ENCODE measurements at regions of chr12 and their contacts with region 1.

Region 1: DNA sequence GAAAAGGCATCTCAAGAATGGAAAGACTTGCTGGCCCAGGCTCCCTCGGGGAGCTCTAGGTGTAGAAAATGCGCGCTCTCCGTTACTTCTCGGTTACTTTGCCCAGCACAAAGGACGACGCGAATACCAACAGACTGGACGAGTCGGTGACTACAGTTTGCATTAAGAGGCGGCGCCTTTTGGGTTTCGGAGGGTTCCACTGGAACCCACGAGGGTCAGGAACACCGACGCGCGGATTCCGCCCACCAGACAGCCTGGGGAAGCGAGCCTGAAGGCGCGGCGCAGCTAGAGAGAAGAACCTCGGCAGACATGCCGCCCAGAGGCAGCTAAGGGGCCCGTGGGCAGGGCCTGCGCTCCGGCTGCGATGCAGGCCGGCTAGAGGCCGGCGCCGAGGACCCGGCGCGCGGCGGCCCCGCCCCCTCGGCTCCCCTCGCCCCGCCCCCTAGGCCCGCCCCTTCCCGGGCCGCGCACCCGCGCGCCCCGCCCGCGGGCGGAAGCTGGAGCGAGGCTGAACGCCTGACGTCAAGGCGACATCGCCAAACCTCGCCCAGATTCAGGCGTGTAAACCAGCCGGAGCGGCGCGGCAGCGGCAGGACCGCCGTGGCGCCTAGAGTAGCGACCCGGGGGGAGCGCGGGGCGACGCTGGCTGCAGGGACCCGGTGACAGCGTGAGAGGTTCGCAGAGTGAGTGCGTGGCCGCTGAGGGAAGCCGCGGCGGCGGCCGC is at the start of gene RAP1B:
- DNase-seq: peak; percentile 94
- ATAC-seq: peak; percentile 76
- H3K4me3 Mint-ChIP-seq: peak within 1 kb of the TSS; percentile 86
- H3K27ac Mint-ChIP-seq: peak within 1 kb of the TSS; percentile 94
- H3K4me1 Mint-ChIP-seq: peaks cover 39% of the 10 kb centered on the region
- H3K27me3 Mint-ChIP-seq: no peaks in the 10 kb centered on the region
- total RNA-seq, gene RAP1B: 174 to 242 TPM

Region 2: GRCh38 chr12:68331869-68332727 is 278.4 kb before region 1 on chr12 and contains the start of gene MDM1:
- CTCF ChIA-PET with region 1: no interaction called
- POLR2A ChIA-PET with region 1: interaction called, 6 read pairs
- intact Hi-C with region 1: loop called (anchors 1 kb)
- DNase-seq: peak; percentile 97
- ATAC-seq: peak; percentile 98
- H3K4me3 Mint-ChIP-seq: peak within 1 kb of the TSS; percentile 80
- H3K27ac Mint-ChIP-seq: peak within 1 kb of the TSS; percentile 55
- H3K4me1 Mint-ChIP-seq: peaks cover 42% of the 10 kb centered on the region
- H3K27me3 Mint-ChIP-seq: peaks cover 2% of the 10 kb centered on the region
- total RNA-seq, gene MDM1: 12.7 to 13.6 TPM

Region 3: GRCh38 chr12:68374307-68374982 is 236.1 kb before region 1 on chr12:
- CTCF ChIA-PET with region 1: interaction called, 3 read pairs
- POLR2A ChIA-PET with region 1: interaction called, 4 read pairs
- intact Hi-C with region 1: loop called in 1 of 2 experiments (anchors 2 kb)
- DNase-seq: peak; percentile 79
- ATAC-seq: peak; percentile 89
- H3K4me3 Mint-ChIP-seq: no peak overlapping the region
- H3K27ac Mint-ChIP-seq: peak overlapping the region; percentile 89
- H3K4me1 Mint-ChIP-seq: peaks cover 48% of the 10 kb centered on the region
- H3K27me3 Mint-ChIP-seq: no peaks in the 10 kb centered on the region

Region 4: GRCh38 chr12:68497702-68498101 is 112.8 kb before region 1 on chr12:
- CTCF ChIA-PET with region 1: interaction called, 5 read pairs
- POLR2A ChIA-PET with region 1: interaction called, 4 read pairs
- intact Hi-C with region 1: loop called (anchors 1 to 5 kb)
- DNase-seq: peak; percentile 27
- ATAC-seq: peak; percentile 78
- H3K4me3 Mint-ChIP-seq: peak overlapping the region; percentile 53
- H3K27ac Mint-ChIP-seq: peak overlapping the region; percentile 86
- H3K4me1 Mint-ChIP-seq: peaks cover 37% of the 10 kb centered on the region
- H3K27me3 Mint-ChIP-seq: peaks cover 2% of the 10 kb centered on the region

Region 5: DNA sequence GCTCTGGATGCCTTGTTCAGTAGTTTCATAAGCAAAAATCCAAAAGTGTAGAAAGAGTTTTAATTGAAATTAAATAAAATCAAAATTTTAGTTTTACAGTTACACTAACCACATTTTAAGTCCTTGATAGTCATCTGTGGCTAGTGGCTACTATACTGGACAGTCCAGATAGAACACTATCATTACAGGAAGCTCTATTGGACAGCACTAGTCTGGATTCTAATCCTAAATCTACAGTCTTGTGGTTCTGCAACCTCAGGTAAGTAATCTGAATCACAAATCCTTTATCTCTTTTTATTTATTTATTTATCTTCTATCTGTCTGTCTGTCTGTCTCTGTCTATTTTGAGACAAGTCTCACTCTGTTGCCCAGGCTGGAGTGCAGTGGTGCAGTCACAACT is 18.2 kb after region 1 on chr12:
- CTCF ChIA-PET with region 1: interaction called, 3 read pairs
- POLR2A ChIA-PET with region 1: no interaction called
- intact Hi-C with region 1: loop called in 1 of 2 experiments (anchors 1 kb)
- DNase-seq: no peak
- ATAC-seq: no peak
- H3K4me3 Mint-ChIP-seq: no peak overlapping the region
- H3K27ac Mint-ChIP-seq: peak overlapping the region; percentile 60
- H3K4me1 Mint-ChIP-seq: peaks cover 72% of the 10 kb centered on the region
- H3K27me3 Mint-ChIP-seq: no peaks in the 10 kb centered on the region

Region 6: DNA sequence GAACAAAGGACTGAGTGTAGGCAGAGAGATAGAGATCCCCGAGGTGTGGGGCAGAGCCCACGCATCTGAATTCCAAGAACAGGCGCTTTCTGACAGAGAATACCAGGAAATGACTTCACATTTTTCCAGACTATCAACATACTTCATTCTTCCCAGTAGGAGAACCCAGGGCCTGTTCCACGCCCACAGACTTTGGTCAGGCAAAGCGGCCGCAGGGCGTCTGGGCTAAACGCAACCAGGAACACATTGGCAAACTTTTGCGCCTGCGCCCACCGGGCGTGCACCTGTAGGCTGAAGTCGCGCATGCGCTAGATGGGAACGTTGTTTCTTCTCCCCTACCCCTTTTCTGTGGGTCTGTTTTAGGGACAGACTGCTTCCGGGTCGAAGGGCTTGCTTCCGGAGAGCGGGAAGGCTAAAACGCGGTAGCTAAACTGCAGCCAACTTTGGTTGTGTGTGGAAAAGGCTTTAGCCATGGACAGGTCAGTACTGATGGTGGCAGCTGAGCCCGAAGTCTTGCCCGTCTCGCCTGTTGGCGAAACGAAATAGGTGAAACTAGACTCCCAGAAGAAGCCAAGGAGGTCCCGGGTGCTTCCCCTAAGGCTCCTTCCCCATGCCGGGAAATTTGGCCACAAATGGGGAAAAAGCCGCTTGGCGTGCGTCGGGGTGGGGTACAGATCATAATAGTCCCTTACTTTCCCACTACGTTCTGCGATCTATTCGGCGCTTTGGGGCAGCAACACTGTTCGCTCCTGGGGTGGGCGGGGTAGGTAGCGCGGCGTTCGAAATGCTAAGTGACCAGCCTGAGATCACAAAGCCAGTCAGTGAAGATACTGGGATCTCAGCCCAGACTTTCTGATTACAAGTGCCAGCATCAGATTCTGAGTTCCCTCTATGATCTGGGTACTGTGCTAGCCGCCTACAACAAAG is 76.3 kb after region 1 on chr12 and contains the start of gene NUP107:
- CTCF ChIA-PET with region 1: interaction called, 4 read pairs
- POLR2A ChIA-PET with region 1: interaction called, 3 read pairs
- intact Hi-C with region 1: loop called (anchors 1 to 2 kb)
- DNase-seq: peak; percentile 98
- ATAC-seq: peak; percentile 97
- H3K4me3 Mint-ChIP-seq: peak within 1 kb of the TSS; percentile 89
- H3K27ac Mint-ChIP-seq: peak within 1 kb of the TSS; percentile 97
- H3K4me1 Mint-ChIP-seq: peaks cover 34% of the 10 kb centered on the region
- H3K27me3 Mint-ChIP-seq: no peaks in the 10 kb centered on the region
- total RNA-seq, gene NUP107: 136 to 142 TPM

Region 7: DNA sequence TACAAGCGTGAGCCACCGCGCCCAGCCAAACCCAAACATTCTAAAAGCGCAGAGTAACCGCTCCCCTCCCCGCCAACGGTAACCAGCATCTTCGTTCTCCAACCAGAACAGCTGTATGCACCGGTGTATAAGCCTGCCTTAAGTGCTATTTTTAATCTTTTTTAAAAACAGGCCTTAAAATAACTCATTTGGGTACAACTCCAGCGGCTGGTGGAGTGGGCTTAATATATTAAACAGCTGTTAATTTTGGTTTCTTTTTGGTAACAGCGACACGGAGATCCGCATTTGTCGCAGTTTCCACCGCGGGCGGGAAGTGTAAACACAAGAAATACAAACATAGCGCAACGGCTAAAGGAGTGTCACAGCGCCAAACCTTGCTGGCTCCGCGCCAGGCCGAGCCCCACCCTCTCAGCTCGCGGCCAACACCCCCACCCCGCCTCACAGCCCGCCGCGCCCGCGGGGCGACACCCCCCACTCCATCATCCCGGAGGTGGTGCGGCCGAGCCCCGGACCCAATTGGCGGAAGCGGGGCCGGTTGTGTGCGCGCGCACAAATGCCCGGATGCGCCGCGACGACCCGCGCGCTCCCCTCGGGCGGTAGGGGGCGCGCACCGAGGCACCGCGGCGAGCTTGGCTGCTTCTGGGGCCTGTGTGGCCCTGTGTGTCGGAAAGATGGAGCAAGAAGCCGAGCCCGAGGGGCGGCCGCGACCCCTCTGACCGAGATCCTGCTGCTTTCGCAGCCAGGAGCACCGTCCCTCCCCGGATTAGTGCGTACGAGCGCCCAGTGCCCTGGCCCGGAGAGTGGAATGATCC is 197.2 kb after region 1 on chr12 and contains the start of gene MDM2:
- CTCF ChIA-PET with region 1: no interaction called
- POLR2A ChIA-PET with region 1: no interaction called
- intact Hi-C with region 1: loop called (anchors 2 kb)
- DNase-seq: peak; percentile 96
- ATAC-seq: peak; percentile 89
- H3K4me3 Mint-ChIP-seq: peak within 1 kb of the TSS; percentile 88
- H3K27ac Mint-ChIP-seq: peak within 1 kb of the TSS; percentile 99
- H3K4me1 Mint-ChIP-seq: peaks cover 34% of the 10 kb centered on the region
- H3K27me3 Mint-ChIP-seq: no peaks in the 10 kb centered on the region
- total RNA-seq, gene MDM2: 114 to 119 TPM

Region 8: DNA sequence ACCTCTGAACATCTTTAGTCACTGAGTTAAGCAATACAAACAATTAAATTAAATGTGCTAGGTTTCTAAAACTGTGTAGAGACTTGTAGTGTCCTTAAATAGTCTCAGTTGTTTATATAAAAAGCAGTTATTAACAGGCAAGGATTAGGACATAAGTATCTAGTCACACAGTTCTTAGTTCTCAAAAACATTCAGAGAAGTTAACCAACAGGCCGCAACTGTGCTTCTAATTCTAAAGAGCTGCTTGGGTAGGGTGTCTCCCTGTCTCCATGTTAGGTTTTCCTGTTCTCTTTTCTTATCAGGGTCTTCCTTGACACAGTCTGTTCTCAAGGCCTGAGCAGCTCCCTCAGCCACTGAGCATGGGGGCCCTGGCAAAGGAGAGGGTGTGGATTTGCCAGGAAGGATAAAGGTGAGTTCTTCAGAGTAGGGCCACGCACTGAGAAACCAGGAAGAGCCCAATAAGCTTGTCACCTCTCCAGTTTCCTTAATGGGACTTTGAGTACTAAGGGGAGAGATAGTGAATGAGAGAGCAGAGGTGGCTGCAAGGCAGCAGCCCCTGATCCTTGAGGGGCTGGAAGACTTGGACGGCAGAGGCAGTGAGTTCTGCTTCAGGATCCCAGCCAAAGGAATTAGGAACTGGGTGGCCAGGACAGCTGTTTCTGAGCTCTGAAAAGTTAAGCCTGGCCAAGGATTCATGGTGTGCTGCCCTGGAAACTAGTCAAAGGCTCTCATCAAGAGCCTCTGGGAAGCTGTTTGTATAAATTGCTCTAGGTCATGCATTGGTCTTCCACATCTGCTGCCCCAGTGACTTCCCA is 1391.8 kb after region 1 on chr12:
- CTCF ChIA-PET with region 1: no interaction called
- POLR2A ChIA-PET with region 1: no interaction called
- intact Hi-C with region 1: no loop called
- DNase-seq: no peak
- ATAC-seq: no peak
- H3K4me3 Mint-ChIP-seq: no peak overlapping the region
- H3K27ac Mint-ChIP-seq: no peak overlapping the region
- H3K4me1 Mint-ChIP-seq: no peaks in the 10 kb centered on the region
- H3K27me3 Mint-ChIP-seq: peaks cover 2% of the 10 kb centered on the region